GM13976 (cell line): ENCODE measurements at regions of chr13 and their contacts with region 1.

Region 1: GRCh38 chr13:80363890-80364503 is 23.1 kb upstream of the SPRY2 start:
- DNase-seq: no peak
- CTCF ChIP-seq: peak; percentile 53

Region 2: GRCh38 chr13:79679334-79679733 is 684.7 kb before region 1 on chr13:
- in situ Hi-C with region 1: loop called (anchors 25 kb)
- DNase-seq: peak; percentile 16
- CTCF ChIP-seq: peak; percentile 78

Region 3: GRCh38 chr13:79775830-79776229 is 588.2 kb before region 1 on chr13:
- in situ Hi-C with region 1: loop called (anchors 25 kb)
- DNase-seq: peak; percentile 25
- CTCF ChIP-seq: peak; percentile 45